Panc1 (cell line): ENCODE measurements at regions of chr16 and their contacts with region 1.

Region 1: DNA sequence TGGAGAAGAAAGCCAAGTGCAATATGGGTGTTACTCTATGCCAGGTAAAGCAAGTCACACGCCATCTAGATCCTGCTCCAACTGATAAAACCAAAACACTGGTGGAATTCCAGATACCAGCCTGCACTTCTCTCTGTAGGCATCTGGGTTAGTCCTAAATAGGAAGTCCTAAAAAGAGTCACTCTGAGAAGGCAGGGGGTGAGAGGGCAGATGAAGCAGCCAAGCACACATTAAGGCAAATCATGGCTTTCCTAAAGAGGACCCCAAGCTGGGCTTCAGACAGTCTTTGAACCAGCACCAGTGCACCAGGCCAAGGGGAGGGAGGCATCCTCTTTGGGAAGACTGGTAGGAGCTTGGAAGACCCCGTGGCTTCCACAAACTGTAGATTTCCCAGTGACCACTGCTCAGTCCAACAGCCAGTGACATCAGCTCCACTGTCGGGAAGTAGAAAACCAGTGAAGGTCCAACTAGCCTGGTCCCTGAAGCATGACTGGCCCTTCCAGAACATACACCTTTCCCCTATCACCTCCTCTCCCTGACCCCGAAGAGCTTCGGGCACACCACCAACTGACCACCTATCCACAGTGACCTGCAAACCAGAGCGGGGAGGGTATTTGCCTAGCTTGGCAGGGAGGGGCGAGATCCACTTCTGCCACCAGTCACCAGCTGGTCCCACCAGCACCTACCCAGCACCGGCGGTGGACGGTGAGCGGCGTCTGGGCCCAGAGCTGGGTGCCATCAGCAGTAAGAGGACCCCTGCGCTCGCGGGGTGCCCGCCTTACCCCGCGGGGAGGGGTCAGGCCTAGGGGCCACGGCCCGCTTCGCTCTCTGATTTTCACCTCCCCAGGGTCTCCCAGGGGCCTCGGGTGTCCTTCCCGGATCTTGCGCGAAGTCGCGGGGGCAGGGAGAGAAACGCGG is 1.0 kb downstream of the LITAF start:
- DNase-seq: no peak
- ATAC-seq: peak; percentile 59
- H3K4me3 ChIP-seq: peak overlapping the region; percentile 66 to 79
- H3K27ac ChIP-seq: peak overlapping the region; percentile 87
- H3K4me1 ChIP-seq: peaks cover 33% of the 10 kb centered on the region
- H3K27me3 ChIP-seq: no peaks in the 10 kb centered on the region
- CTCF ChIP-seq: no peak

Region 2: GRCh38 chr16:11446566-11447119 is 139.1 kb before region 1 on chr16:
- CTCF ChIA-PET with region 1: interaction called, 10 read pairs
- POLR2A ChIA-PET with region 1: no interaction called
- in situ Hi-C with region 1: no loop called
- intact Hi-C with region 1: no loop called
- DNase-seq: no peak
- ATAC-seq: no peak
- H3K4me3 ChIP-seq: no peak overlapping the region
- H3K27ac ChIP-seq: no peak overlapping the region
- H3K4me1 ChIP-seq: no peaks in the 10 kb centered on the region
- H3K27me3 ChIP-seq: no peaks in the 10 kb centered on the region
- CTCF ChIP-seq: no peak

Region 3: GRCh38 chr16:11484691-11485258 is 100.9 kb before region 1 on chr16:
- CTCF ChIA-PET with region 1: no interaction called
- POLR2A ChIA-PET with region 1: no interaction called
- in situ Hi-C with region 1: no loop called
- intact Hi-C with region 1: no loop called
- DNase-seq: no peak
- ATAC-seq: no peak
- H3K4me3 ChIP-seq: no peak overlapping the region
- H3K27ac ChIP-seq: no peak overlapping the region
- H3K4me1 ChIP-seq: no peaks in the 10 kb centered on the region
- H3K27me3 ChIP-seq: no peaks in the 10 kb centered on the region
- CTCF ChIP-seq: no peak

Region 4: GRCh38 chr16:11546608-11547061 is 39.1 kb before region 1 on chr16:
- CTCF ChIA-PET with region 1: no interaction called
- POLR2A ChIA-PET with region 1: interaction called, 13 read pairs
- in situ Hi-C with region 1: no loop called
- intact Hi-C with region 1: no loop called
- DNase-seq: no peak
- ATAC-seq: no peak
- H3K4me3 ChIP-seq: no peak overlapping the region
- H3K27ac ChIP-seq: no peak overlapping the region
- H3K4me1 ChIP-seq: no peaks in the 10 kb centered on the region
- H3K27me3 ChIP-seq: no peaks in the 10 kb centered on the region
- CTCF ChIP-seq: no peak

Region 5: DNA sequence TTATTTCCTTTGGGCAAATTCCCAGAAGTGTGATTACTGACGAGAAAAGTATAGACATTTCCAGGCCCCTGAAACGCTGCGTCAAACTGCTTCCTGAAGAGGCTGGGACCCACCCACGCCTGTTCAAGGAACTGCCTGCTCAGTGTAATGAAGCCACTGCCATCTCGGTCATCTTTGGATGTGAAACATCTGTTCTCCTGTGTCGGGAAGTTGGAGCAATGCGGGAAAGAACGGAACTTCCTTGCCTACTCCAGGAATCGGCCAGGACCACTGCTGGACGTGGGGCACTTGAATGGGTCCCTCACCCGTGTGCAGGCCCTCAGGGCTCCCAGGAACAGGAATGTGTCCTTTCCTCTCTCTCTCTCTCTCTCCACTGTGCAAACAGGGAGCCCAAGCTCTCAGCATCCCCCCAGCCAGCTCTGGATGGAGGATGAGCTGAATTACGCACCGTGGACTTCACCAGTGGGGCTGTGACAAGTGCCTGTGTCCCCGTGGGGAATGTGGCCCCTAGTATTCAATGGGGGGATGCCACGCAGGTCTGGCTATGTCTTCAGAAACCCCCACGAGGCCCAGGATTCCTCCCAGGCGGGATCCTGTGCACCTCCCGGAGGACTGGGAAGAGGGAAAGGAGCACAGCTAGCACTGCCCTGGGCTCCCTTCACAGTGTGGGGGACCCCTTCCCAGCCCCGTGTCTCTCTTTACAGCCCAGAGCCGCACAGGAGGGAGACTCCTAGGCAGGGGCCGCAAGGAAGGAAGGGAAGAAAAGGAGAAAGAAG is 19.3 kb after region 1 on chr16:
- CTCF ChIA-PET with region 1: no interaction called
- POLR2A ChIA-PET with region 1: no interaction called
- in situ Hi-C with region 1: no loop called
- intact Hi-C with region 1: no loop called
- DNase-seq: no peak
- ATAC-seq: no peak
- H3K4me3 ChIP-seq: no peak overlapping the region
- H3K27ac ChIP-seq: no peak overlapping the region
- H3K4me1 ChIP-seq: no peaks in the 10 kb centered on the region; the same call in 1 of the 2 replicates
- H3K27me3 ChIP-seq: no peaks in the 10 kb centered on the region
- CTCF ChIP-seq: no peak

Region 6: DNA sequence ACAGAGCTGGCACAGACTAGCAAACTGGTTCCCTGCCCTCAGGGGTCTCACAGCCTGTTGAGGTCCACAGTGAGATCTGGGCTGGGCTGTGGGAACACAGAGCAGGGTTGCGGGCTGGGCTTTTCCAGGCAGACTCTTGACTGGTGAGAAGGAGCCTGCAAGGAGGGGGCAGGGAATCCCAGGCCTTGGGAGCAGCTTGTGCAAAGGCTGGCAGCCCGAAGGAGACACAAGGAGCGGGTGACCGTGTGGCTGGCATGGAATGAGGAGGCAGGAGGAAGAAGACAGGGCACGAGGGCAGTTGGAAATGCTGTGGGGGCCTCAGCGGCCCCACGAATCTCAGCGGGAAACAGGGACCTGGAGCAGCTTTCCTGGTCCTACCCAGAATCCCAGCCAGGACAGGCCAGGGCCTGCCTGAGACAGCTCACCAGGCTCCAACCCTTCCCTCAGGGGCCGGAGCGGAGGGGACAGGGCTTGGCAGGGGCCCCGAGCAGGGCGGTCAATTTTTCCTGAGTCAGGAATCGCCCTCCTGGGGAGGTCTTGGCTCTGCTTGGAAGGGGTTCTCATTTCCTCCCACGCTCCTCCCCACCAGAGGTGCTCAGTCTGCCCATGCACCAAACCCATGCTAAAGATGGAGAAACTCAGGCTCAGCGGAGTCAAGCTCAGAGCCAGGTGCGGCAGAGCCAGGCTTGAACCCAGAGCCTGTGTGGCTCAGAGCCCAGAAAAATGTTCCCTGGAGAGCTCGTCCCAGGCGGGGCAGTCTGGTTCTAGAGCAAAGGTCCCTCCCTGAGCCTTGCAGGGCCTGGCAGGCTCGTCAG is 73.4 kb after region 1 on chr16:
- CTCF ChIA-PET with region 1: no interaction called
- POLR2A ChIA-PET with region 1: no interaction called
- in situ Hi-C with region 1: no loop called
- intact Hi-C with region 1: no loop called
- DNase-seq: no peak
- ATAC-seq: peak; percentile 63
- H3K4me3 ChIP-seq: no peak overlapping the region
- H3K27ac ChIP-seq: no peak overlapping the region
- H3K4me1 ChIP-seq: no peaks in the 10 kb centered on the region
- H3K27me3 ChIP-seq: no peaks in the 10 kb centered on the region
- CTCF ChIP-seq: no peak